H1 (cell line): ENCODE measurements at regions of chr1 and their contacts with region 1.

Region 1: DNA sequence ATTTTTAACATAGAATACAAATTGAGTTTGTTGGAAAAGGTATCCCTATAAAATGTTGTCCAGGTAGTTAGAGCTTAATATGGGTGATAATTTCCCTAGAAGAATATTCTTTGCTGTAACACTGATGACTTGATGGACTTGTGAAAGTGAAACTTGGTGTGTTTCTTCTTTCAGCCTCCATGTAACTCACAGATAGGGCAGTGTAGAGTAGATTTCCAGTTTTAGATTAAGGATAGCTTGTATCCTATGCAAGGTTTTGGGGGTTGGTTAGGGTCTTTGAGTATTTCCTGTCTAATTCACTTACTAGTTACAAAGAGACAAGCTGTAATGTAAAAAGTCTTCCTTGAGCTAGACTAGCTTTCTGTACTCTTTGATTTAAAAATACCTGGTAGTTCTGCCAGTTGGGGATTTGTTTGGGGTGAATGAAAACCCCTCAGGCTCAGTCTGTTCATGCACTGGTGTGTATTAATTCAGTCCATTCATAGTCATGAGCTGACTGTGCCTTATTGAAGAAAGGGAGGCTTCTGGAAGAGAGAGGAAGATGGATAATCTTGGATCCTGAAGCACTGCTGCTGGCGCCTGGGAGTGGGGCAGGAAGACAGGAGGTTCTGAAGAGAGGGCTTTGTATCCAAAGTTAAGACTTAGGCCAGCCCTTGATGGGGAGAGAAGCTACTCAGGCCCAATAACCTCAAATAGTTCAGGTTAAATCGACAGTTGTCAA is 83.6 kb downstream of the CAMTA1 start:
- DNase-seq: no peak
- H3K4me3 ChIP-seq: no peak overlapping the region
- H3K27ac ChIP-seq: no peak overlapping the region
- H3K4me1 ChIP-seq: peaks cover 2 to 18% (median 14%) of the 10 kb centered on the region in 4 experiments; a peak in 6 of 7 replicates
- H3K27me3 ChIP-seq: no peaks in the 10 kb centered on the region
- CTCF ChIP-seq: no peak
- EP300 ChIP-seq: no peak
- POLR2A ChIP-seq: no peak
- RAD21 ChIP-seq: no peak

Region 2: GRCh38 chr1:6884652-6885153 is 15.9 kb after region 1 on chr1:
- CTCF ChIA-PET with region 1: interaction called, 24 read pairs
- POLR2A ChIA-PET with region 1: interaction called, 9 read pairs
- DNase-seq: no peak
- H3K4me3 ChIP-seq: no peak overlapping the region
- H3K27ac ChIP-seq: no peak overlapping the region
- H3K4me1 ChIP-seq: no peaks in the 10 kb centered on the region
- H3K27me3 ChIP-seq: no peaks in the 10 kb centered on the region
- CTCF ChIP-seq: no peak
- EP300 ChIP-seq: no peak
- POLR2A ChIP-seq: no peak
- RAD21 ChIP-seq: no peak